Activated B cell treated with CpG ODN at 0.5 μM for 24 hours (primary cell): ENCODE measurements at regions of chr1 and their contacts with region 1.

Region 1: GRCh38 chr1:206050655-206051235 is 2.2 kb upstream of the RHEX start:
- DNase-seq: peak; percentile 71
- ATAC-seq: peak; percentile 86
- H3K4me3 Mint-ChIP-seq: peak overlapping the region; percentile 58
- H3K27ac Mint-ChIP-seq: peak overlapping the region; percentile 95
- H3K4me1 Mint-ChIP-seq: peaks cover 94% of the 10 kb centered on the region
- H3K27me3 Mint-ChIP-seq: no peaks in the 10 kb centered on the region
- CTCF ChIP-seq: no peak

Region 2: DNA sequence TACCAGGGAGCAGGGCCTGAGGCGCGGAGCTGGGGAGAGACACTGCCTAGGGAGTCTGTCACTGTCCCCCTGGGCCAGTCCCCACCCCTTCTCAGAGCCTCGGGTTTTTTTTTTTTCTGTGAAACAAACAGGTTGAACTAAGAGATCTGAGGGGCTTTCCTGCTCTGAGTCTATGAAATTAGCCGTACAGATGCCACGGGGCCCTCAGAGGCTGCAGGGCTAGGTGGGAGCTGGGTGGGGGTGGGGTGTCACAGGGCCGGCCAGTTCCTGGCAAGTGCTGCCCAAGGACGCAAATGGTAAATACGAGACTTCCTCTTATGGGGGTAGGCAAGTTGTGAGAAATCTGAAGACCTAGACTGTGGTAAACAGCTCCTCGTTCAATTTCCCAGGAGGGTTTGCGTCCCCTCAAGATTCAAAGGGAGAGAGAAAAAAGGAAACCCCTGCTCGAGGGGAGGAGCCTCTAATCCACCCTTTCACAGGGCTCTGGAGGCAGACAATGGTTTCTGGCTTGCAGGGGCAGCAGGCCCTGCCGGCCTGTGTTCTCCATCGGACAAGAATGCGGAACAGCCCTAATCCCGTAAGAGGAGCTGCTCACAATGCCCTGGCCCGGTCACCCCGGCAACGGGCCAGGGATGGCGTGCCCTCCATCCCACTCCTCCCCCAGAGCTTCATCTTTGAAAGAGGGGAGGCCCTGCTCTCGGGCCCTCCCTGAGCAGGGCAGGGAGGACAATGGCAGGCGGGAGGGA is 737.0 kb before region 1 on chr1:
- CTCF ChIA-PET with region 1: no interaction called
- POLR2A ChIA-PET with region 1: no interaction called
- intact Hi-C with region 1: loop called (anchors 10 kb)
- DNase-seq: peak; percentile 55
- ATAC-seq: peak; percentile 82
- H3K4me3 Mint-ChIP-seq: peak overlapping the region; percentile 85
- H3K27ac Mint-ChIP-seq: peak overlapping the region; percentile 98
- H3K4me1 Mint-ChIP-seq: peaks cover 95% of the 10 kb centered on the region
- H3K27me3 Mint-ChIP-seq: no peaks in the 10 kb centered on the region
- CTCF ChIP-seq: no peak

Region 3: DNA sequence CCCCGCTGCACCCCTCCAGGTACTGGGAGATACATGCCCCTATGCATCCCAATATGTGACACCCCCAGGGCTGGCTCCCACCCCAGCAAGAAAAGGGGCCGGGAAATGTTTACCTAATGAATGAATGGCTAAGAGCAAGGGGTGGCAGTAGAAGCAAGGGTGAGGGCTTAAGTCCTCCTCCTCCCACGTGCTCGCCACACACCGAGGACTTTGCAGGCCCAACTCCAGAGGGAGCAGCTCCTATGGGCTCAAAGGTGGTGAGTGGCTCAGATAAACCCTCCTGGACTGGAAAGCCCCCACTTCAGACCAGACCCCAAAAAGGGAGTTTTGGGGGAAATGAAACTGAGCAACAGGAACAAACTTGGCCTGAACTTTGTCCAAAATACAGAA is 381.8 kb before region 1 on chr1:
- CTCF ChIA-PET with region 1: no interaction called
- POLR2A ChIA-PET with region 1: no interaction called
- intact Hi-C with region 1: loop called (anchors 2 kb)
- DNase-seq: no peak
- ATAC-seq: peak; percentile 68
- H3K4me3 Mint-ChIP-seq: peak overlapping the region; percentile 80
- H3K27ac Mint-ChIP-seq: peak overlapping the region; percentile 93
- H3K4me1 Mint-ChIP-seq: peaks cover 87% of the 10 kb centered on the region
- H3K27me3 Mint-ChIP-seq: no peaks in the 10 kb centered on the region
- CTCF ChIP-seq: no peak

Region 4: DNA sequence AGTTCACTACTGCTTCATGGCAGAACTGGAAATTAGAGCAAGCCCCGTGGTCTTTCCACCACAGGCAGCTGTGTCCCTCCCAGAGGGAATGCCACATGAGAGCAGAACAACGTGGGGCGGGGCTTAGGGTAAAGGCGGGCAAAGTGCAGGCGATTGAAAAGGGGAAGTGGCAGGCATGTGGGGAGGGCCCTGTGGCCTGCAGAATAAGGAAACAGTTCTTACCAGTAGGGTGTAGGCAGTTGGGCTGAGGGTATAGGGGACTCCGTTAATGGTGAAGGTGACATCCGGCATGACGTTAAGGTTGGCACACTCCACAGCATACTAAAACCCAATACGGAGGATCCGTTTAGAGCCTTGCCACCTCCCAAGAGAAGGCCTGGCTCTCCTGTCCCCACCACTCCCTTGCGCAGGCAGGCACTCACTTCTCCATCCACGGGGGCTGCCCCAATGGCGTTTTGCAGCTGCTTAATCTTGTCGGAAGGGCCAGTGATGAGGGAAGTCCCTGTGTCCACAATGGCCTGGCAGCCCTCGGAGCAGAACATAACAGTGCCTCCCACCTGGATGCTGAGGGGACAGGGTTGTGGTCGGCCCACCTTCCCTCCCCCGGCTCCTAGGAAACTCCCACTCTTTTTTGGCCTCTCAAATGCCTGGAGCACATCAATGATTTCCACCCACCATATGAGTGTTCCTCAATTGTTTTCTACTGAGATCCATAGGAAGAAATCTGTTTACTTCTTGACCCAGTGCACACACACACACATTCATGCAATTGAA is 38.5 kb before region 1 on chr1:
- CTCF ChIA-PET with region 1: no interaction called
- POLR2A ChIA-PET with region 1: interaction called, 3 read pairs
- intact Hi-C with region 1: loop called (anchors 1 kb)
- DNase-seq: peak; percentile 79
- ATAC-seq: peak; percentile 99
- H3K4me3 Mint-ChIP-seq: peak overlapping the region; percentile 70
- H3K27ac Mint-ChIP-seq: peak overlapping the region; percentile 91
- H3K4me1 Mint-ChIP-seq: peaks cover 27% of the 10 kb centered on the region
- H3K27me3 Mint-ChIP-seq: no peaks in the 10 kb centered on the region
- CTCF ChIP-seq: no peak

Region 5: DNA sequence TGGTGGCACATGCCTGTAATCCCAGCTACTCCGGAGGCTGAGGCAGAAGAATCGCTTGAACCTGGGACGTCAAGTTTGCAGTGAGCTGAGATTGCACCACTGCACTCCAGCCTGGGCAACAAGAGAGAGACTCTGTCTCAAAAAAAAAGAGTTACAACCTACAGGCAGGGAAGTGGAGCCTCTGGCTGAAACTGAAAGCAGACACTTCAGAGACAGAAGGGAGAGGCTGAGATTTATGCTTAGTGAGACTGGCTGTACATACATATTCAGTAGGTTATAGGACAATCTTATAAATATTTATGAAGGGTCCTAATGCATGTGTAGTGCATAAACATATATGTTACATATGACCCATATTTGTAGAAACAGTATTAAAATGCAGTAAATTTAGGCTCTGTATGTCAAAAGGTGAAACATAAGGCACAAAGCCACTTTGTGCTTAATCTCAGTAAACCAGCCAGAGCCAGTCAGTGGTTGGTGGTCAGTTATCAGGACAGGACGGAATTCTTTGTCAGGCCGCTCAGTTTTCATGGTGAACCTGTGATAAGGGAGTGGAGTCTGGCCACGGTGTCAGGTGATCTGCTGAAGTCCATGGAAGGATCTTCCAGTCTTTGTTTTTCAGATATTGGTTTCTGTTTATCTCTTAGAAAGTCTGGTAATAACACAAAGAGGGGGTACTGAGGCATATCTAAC is 15.9 kb after region 1 on chr1:
- CTCF ChIA-PET with region 1: no interaction called
- POLR2A ChIA-PET with region 1: interaction called, 13 read pairs
- intact Hi-C with region 1: loop called (anchors 1 kb)
- DNase-seq: no peak
- ATAC-seq: peak; percentile 78
- H3K4me3 Mint-ChIP-seq: peak overlapping the region; percentile 73
- H3K27ac Mint-ChIP-seq: peak overlapping the region; percentile 85
- H3K4me1 Mint-ChIP-seq: peaks cover 57% of the 10 kb centered on the region
- H3K27me3 Mint-ChIP-seq: no peaks in the 10 kb centered on the region
- CTCF ChIP-seq: no peak

Region 6: DNA sequence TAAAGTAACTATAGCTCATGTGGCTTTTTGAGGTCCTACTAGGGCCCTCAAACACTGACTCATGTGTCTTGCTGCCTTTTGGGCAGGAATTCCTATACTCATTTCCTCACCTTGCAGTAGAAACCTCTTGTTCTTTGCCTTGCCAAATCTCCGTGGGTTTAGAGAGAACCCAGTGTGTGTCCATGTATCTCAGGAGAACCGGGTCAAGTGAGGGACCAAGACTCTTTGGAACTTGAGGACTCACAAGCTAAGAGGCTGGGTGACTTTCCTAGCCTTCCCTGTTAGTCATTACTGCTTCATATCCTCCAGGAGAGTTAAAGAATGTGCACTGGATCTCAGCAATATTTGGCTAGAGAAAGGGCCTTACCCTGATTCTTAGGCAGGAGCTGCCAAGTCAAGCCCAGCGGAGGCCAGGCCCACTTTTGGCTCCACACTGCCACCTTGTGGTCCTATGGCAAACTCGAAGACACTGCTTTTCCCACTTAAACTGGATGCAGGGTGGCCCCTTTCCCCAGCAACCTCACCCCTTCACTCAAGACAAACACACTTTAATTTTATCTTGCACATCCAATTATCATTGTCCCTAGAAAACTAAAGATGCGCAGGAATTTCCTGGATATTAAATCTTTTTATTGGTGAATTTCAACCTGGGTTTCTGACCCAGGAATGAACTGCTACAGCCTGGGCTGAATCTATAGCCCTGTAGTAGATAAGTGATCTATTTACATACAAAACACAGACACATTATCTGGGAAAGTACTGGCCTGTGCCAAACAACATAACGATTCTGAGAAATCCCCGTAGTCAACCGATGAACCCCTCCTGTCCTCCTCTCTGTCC is 55.8 kb after region 1 on chr1:
- CTCF ChIA-PET with region 1: interaction called, 12 read pairs
- POLR2A ChIA-PET with region 1: interaction called, 13 read pairs
- intact Hi-C with region 1: loop called (anchors 1 kb)
- DNase-seq: peak; percentile 71
- ATAC-seq: peak; percentile 89
- H3K4me3 Mint-ChIP-seq: no peak overlapping the region
- H3K27ac Mint-ChIP-seq: peak overlapping the region; percentile 73
- H3K4me1 Mint-ChIP-seq: peaks cover 34% of the 10 kb centered on the region
- H3K27me3 Mint-ChIP-seq: no peaks in the 10 kb centered on the region
- CTCF ChIP-seq: peak; percentile 70

Region 7: GRCh38 chr1:206674745-206675175 is 624.0 kb after region 1 on chr1:
- CTCF ChIA-PET with region 1: no interaction called
- POLR2A ChIA-PET with region 1: no interaction called
- intact Hi-C with region 1: loop called (anchors 5 kb)
- DNase-seq: no peak
- ATAC-seq: no peak
- H3K4me3 Mint-ChIP-seq: no peak overlapping the region
- H3K27ac Mint-ChIP-seq: peak overlapping the region; percentile 73
- H3K4me1 Mint-ChIP-seq: peaks cover 24% of the 10 kb centered on the region
- H3K27me3 Mint-ChIP-seq: peaks cover 5% of the 10 kb centered on the region
- CTCF ChIP-seq: no peak

Region 8: GRCh38 chr1:206872139-206872538 is 821.4 kb after region 1 on chr1:
- CTCF ChIA-PET with region 1: no interaction called
- POLR2A ChIA-PET with region 1: no interaction called
- intact Hi-C with region 1: no loop called
- DNase-seq: no peak
- ATAC-seq: no peak
- H3K4me3 Mint-ChIP-seq: no peak overlapping the region
- H3K27ac Mint-ChIP-seq: no peak overlapping the region
- H3K4me1 Mint-ChIP-seq: no peaks in the 10 kb centered on the region
- H3K27me3 Mint-ChIP-seq: peaks cover 9% of the 10 kb centered on the region
- CTCF ChIP-seq: no peak